ENCODE measurements at regions of chr11 and their contacts with region 1.

Region 1: DNA sequence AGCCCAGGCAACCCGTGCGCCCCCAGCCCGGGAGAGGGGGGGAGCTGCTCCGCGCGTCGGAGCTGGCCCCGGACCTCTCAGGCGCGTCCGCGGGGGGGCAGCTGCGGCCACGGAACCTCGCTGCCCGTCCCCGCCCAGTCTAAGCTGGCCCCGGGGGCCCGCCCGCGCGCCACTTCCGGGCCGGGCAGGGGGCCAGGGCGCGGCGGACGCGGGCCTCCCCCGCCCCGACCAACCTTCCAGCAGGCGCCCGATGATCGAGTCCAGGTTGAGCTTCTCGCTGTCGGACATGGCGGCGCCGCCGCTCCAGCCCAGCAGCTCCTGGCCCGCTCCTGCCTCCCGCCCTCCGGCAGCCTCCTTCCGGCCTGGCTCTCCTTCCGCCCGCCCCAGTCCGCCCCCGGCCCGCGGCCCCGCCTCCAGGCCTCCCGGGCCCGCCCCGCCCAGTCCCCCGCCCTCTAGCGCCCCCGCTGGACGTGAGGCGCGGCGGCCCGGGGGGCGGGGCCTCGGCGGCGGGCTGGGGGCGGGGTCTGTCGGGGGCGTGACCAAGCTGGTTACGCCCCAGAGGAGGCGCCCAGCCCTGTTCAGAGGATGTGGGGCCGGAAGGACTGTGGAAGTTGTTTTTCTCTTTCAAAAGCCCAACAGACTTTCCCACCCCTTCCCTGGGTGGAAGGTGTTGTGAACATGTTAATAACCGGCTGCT is at the start of gene PPP1CA:
- DNase-seq: peak; percentile 88
- ATAC-seq: peak; percentile 86
- H3K4me3 ChIP-seq: peak within 1 kb of the TSS; percentile 88
- H3K27ac ChIP-seq: peak within 1 kb of the TSS; percentile 71
- H3K4me1 ChIP-seq: peaks cover 11% of the 10 kb centered on the region
- H3K27me3 ChIP-seq: no peaks in the 10 kb centered on the region
- CTCF ChIP-seq: 0 out of 2 replicates have a peak, but pooled peaks have one; percentile 30
- total RNA-seq, gene PPP1CA: 449 and 477 TPM in 2 replicates

Region 2: DNA sequence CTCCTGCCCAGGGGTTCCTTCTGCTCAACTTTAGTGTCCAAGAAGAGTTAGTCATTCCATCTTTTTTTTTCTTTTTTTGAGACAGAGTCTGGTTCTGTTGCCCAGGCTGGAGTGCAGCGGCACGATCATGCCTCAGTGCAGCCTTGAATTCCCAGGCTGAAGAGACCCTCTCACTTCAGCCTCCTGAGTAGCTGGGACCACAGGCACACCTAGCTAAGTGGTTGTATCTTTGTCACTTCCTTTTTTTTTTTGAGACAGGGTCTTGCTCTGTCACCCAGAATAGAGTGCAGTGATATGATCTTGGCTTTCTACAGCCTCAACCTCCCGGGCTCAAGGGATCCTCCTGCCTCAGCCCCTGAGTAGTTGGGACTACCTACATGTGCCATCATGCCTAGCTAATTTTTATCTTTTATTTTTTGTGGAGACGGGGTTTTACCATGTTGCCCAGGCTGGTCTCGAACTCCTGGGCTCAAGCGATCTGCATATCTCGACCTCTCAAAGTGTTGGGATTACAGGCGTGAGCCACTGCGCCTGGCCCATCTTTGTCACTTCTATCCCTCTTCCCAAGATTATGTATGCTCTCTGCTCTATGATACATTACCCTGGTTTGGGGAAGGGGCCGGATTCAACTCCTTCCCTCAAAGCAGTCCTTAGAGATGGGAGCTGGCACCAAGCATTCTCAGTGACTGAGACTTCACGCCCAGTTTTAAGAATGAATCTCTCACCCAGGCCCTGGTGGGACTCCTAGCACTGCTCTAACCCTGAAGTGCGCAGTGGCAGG is 88.3 kb before region 1 on chr11:
- CTCF ChIA-PET with region 1: no interaction called
- POLR2A ChIA-PET with region 1: no interaction called
- intact Hi-C with region 1: no loop called
- DNase-seq: no peak
- ATAC-seq: no peak
- H3K4me3 ChIP-seq: peak overlapping the region; percentile 11; the same call in 1 of the 2 replicates
- H3K27ac ChIP-seq: peak overlapping the region; percentile 95
- H3K4me1 ChIP-seq: peaks cover 24% of the 10 kb centered on the region
- H3K27me3 ChIP-seq: no peaks in the 10 kb centered on the region
- CTCF ChIP-seq: no peak

Region 3: DNA sequence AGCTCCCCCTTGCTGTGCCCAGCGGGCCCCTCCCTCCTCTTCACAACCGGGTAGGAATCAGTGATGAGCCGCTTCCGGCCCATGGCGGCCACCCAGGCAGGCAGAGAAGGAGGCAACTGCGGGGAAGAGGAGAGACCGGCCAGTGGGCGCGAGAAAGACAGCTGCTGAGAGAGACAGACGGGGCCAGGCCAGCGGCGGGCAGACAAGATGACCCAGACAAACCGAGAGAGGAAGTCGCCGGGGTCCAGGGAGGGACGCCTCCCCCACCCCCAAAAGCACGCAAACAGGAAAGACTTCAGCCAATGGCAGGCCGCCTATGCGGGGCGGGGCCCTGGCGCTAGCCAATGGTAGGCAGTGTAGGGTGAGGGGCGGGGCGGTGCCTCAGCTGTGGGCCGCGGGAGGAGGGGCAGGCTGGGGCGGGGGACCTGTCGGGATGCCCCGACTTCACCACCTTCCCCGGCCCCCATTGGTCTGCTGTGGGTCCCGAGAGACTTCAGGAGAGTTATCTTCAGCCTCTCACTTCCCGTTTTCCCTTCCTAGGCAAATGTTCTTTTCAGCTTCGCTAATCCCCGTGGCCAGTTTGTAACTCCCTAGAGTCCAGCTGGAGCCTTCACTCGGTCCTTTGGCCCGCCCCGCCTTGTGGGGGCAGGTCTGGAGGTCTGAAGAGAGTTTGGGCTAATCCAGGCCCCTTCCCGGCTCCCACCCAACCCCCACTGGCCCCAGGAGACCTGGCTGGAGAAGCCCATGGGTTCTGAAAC is 48.1 kb before region 1 on chr11 and contains the start of gene POLD4:
- CTCF ChIA-PET with region 1: interaction called, 13 read pairs
- POLR2A ChIA-PET with region 1: interaction called, 8 read pairs
- intact Hi-C with region 1: no loop called
- DNase-seq: peak; percentile 98
- ATAC-seq: peak; percentile 54
- H3K4me3 ChIP-seq: peak within 1 kb of the TSS; percentile 77
- H3K27ac ChIP-seq: peak within 1 kb of the TSS; percentile 93
- H3K4me1 ChIP-seq: peaks cover 63% of the 10 kb centered on the region
- H3K27me3 ChIP-seq: no peaks in the 10 kb centered on the region
- CTCF ChIP-seq: no peak
- total RNA-seq, gene POLD4: 78.5 and 81.5 TPM in 2 replicates

Region 4: GRCh38 chr11:67428052-67428914 is 26.6 kb after region 1 on chr11 and contains the start of gene RPS6KB2:
- CTCF ChIA-PET with region 1: no interaction called
- POLR2A ChIA-PET with region 1: no interaction called
- intact Hi-C with region 1: loop called (anchors 2 kb)
- DNase-seq: peak; percentile 99
- ATAC-seq: peak; percentile 87
- H3K4me3 ChIP-seq: peak within 1 kb of the TSS; percentile 96
- H3K27ac ChIP-seq: peak within 1 kb of the TSS; percentile 18
- H3K4me1 ChIP-seq: peaks cover 10% of the 10 kb centered on the region
- H3K27me3 ChIP-seq: no peaks in the 10 kb centered on the region
- CTCF ChIP-seq: no peak
- total RNA-seq, gene RPS6KB2: 170 and 208 TPM in 2 replicates

Region 5: DNA sequence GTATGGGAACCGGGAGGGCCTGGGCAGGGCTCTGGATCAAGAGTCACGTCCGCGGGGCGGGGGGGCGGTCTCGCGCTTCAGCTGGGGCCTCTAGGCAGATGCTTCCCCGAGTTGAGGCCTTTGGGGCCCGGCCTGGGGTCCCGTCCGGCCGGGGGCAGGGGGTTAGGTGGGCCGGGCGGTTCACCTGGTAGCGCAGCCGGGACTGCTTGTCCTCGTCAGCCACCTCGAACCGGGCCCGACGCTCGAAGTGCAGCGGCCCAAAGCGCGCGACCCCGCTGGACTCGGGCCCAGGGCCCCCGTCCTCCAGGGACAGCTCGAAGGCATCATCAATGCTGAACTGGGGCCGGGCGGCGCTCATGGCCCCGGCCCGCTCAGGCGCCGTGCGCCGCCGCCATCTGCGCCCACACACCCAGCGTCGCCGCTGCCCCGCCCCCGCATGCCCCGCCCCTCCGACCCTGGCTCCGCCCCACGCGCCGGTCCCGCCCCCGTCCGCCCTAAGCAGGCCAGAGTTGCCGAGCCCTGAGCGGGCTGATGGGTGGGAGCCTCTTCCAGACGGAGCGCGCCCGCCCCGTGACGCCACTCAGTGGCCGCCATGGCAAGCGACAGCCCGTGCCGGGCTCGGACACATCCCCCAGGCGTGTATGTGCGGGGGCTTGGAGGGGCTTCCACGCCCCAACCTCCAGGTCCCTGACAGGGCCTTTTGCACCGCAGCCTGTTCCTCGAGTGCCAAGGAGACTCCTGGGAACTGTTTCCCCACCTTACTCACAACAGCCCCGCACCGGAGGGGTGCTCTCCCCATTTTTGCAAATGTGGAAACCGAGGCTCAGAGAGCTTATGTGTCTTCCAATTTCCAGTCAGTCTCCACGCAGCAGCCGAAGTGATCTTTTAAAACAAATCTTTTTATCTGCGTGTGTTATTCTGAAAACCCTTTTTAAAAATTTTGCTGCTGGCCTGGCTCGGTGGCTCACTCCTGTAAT is 67.5 kb after region 1 on chr11 and contains the start of gene TMEM134:
- CTCF ChIA-PET with region 1: interaction called, 15 read pairs
- POLR2A ChIA-PET with region 1: no interaction called
- intact Hi-C with region 1: loop called (anchors 1 kb)
- DNase-seq: peak; percentile 92
- ATAC-seq: peak; percentile 65
- H3K4me3 ChIP-seq: peak within 1 kb of the TSS; percentile 85
- H3K27ac ChIP-seq: peak within 1 kb of the TSS; percentile 90
- H3K4me1 ChIP-seq: peaks cover 31% of the 10 kb centered on the region
- H3K27me3 ChIP-seq: no peaks in the 10 kb centered on the region
- CTCF ChIP-seq: peak; percentile 65
- total RNA-seq, gene TMEM134: 73.5 and 107 TPM in 2 replicates